Ascending aorta (tissue), 2 donors: ENCODE measurements at regions of chr3 and their contacts with region 1.

Region 1: GRCh38 chr3:167814441-167814951 is 79.0 kb downstream of the SERPINI1 start:
- DNase-seq: peak in 1 of 2 donors; percentile 75
- H3K4me3 ChIP-seq: peak overlapping the region in 1 of 2 donors; percentile 1
- H3K27ac ChIP-seq: peak overlapping the region; percentile 62 to 73
- H3K4me1 ChIP-seq: peaks cover 10 to 28% of the 10 kb centered on the region in 2 donors
- H3K27me3 ChIP-seq: no peaks in the 10 kb centered on the region
- CTCF ChIP-seq: no peak

Region 2: GRCh38 chr3:167539849-167540248 is 274.6 kb before region 1 on chr3:
- intact Hi-C with region 1: no loop called
- DNase-seq: no peak
- H3K4me3 ChIP-seq: no peak overlapping the region
- H3K27ac ChIP-seq: no peak overlapping the region
- H3K4me1 ChIP-seq: no peaks in the 10 kb centered on the region
- H3K27me3 ChIP-seq: no peaks in the 10 kb centered on the region
- CTCF ChIP-seq: no peak

Region 3: GRCh38 chr3:167734498-167735232 is 79.8 kb before region 1 on chr3 and contains the start of gene PDCD10:
- intact Hi-C with region 1: loop called (anchors 1 kb)
- DNase-seq: peak; percentile 95 to 99
- H3K4me3 ChIP-seq: peak within 1 kb of the TSS; percentile 91
- H3K27ac ChIP-seq: peak within 1 kb of the TSS; percentile 89 to 92
- H3K4me1 ChIP-seq: peaks cover 0 to 22% of the 10 kb centered on the region in 2 donors
- H3K27me3 ChIP-seq: no peaks in the 10 kb centered on the region
- CTCF ChIP-seq: no peak
- total RNA-seq, gene PDCD10: 55.6 TPM